ENCODE measurements at regions of chr9 and their contacts with region 1.

Region 1: DNA sequence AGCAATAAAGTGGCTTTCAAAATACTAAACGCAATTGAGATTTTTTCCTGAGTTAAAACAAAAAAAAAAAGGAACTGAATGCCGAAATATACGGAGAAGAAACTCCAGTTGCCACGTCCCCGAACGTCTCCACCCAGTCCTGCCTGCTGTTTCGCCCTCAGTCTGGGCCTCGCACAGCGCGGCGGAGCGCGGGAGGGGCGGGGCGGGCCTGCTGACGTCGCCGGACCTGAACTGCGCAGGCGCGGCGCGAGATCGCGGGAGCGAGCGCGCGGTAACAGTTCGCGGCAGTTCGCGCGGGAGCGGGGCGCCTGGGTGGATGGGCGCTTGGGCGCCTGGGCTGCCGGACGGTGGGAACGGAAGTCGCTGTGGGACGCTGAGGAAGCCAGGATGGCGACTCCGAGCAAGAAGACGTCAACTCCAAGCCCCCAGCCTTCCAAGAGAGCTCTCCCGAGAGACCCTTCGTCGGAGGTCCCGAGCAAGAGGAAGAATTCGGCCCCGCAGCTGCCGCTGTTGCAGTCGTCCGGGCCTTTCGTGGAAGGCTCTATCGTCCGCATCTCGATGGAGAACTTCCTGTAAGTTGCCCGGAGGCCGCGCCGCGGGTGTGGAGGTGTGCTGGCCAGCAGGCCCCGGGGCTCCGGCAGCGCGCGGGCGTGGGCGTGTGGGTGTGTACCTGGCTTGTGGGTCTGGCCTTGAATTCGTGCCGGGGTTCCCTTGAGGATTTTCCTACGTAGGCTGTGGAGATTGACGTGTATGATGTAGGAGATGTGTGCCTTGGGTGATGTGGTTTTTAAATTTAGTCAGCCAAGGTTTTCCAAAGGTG is at the start of gene SMC5:
- DNase-seq: peak; percentile 72 to 95
- H3K4me3 ChIP-seq: peak within 1 kb of the TSS; percentile 75
- H3K27ac ChIP-seq: peak within 1 kb of the TSS; percentile 89
- H3K4me1 ChIP-seq: peaks cover 68% of the 10 kb centered on the region
- H3K27me3 ChIP-seq: no peaks in the 10 kb centered on the region
- CTCF ChIP-seq: no peak
- total RNA-seq, gene SMC5: 34.4 and 41.9 TPM in 2 replicates

Region 2: DNA sequence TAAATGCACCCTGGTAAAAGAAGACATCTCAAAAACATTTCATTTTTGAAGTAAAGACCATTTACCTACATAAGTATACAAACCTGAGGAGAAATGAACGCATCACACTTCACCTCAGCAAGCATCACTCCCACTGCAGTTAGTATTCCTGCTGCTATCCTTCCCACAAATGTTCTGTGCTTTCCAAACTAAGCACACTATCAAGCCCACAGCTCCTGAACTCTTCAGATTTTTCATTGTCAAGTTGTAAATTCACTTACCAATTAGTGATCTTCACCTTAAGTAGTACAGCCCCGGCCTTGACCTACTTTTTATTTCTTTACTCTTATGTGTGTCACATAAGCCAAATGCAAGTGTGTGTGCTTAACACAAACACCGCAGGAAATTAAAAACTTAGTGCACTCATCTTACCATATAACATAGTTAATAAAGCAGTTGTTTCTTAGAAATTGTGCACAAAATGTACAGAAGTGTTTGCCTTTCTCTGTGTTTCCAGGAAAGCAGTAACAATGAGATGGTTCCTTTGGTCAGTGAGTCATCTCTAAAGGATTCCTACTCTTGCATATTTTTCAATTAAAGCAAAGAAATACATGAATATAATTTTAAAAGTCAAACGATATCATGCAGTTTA is 756.1 kb before region 1 on chr9:
- CTCF ChIA-PET with region 1: no interaction called
- POLR2A ChIA-PET with region 1: no interaction called
- intact Hi-C with region 1: no loop called
- DNase-seq: no peak
- H3K4me3 ChIP-seq: no peak overlapping the region
- H3K27ac ChIP-seq: no peak overlapping the region
- H3K4me1 ChIP-seq: no peaks in the 10 kb centered on the region; the same call in 1 of the 2 replicates
- H3K27me3 ChIP-seq: no peaks in the 10 kb centered on the region
- CTCF ChIP-seq: no peak

Region 3: GRCh38 chr9:69822091-69822750 is 436.7 kb before region 1 on chr9:
- CTCF ChIA-PET with region 1: no interaction called
- POLR2A ChIA-PET with region 1: interaction called, 10 read pairs
- intact Hi-C with region 1: no loop called
- DNase-seq: no peak
- H3K4me3 ChIP-seq: no peak overlapping the region
- H3K27ac ChIP-seq: no peak overlapping the region
- H3K4me1 ChIP-seq: no peaks in the 10 kb centered on the region
- H3K27me3 ChIP-seq: no peaks in the 10 kb centered on the region
- CTCF ChIP-seq: no peak

Region 4: DNA sequence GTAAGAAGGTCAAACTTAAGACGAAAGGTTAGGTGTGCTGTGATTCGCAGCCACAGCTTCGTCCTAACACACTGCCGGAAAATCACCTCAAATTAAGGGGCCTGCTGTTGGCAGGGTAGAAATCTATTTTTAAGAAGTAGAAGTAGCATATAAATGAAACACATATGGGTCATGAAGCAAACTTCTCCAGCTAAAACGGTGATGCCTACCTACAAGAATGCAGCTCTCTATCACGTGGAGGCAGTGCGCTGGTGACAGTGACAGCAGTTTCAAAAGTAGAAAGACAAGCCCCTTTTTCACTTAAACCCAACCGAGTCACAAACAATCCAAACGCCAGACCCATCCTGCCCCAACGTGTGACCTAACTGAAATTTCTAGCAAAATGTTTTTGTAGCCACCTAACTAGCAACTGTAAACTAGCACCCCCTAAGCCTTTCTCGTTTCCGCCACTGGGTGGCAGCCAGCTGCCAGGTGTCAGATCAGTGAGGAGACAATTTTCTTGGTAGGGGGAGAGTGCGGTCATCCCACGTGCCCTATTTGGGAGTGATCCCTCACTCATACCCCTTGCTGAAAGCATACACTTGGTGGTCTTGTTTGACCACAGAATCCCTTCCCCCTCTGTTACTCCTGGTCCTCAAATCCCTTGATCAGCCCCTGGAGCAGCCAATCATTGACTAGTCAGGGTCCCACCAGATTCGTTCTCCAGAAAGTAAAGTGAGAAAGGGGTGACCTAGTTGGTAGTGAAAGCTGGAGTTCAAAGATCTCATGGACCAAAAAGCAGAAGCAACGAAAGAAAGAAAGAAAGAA is 287.1 kb before region 1 on chr9:
- CTCF ChIA-PET with region 1: interaction called, 4 read pairs
- POLR2A ChIA-PET with region 1: no interaction called
- intact Hi-C with region 1: loop called (anchors 2 kb)
- DNase-seq: peak in 1 of 2 experiments; percentile 73
- H3K4me3 ChIP-seq: no peak overlapping the region
- H3K27ac ChIP-seq: no peak overlapping the region
- H3K4me1 ChIP-seq: no peaks in the 10 kb centered on the region
- H3K27me3 ChIP-seq: no peaks in the 10 kb centered on the region
- CTCF ChIP-seq: peak; percentile 91

Region 5: DNA sequence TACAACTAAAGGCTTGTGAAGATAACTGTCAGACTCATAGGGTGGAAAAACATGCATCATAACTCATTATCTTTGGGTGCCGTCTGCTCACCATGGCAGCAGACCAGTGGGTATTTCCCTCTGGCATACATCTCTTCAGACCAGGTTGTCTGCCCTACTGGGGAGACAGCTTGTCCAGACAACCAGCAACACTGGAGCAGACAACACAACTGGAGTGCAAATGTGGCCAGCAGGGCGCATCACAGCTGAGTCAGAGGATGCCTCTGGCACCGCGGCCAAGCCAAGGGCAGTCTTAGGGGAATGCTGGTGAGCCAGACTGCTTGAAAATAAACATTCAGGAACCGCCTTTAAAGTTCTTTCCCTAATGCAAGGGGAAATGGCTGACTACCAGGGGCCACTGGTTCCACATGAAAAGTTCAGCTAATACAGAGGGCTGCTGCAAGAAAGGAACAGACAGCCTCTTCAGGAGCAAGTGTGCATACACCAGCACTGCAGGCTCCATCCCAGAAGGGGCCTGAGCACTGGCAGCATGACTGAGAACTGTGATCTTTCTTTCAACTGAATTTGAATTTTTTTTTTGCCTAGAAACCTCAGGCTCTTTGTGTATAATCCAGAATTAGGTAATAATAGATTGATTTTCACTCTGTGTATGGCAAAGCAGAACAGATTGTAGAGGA is 137.9 kb before region 1 on chr9:
- CTCF ChIA-PET with region 1: no interaction called
- POLR2A ChIA-PET with region 1: no interaction called
- intact Hi-C with region 1: loop called (anchors 2 kb)
- DNase-seq: peak; percentile 50 to 70
- H3K4me3 ChIP-seq: no peak overlapping the region
- H3K27ac ChIP-seq: no peak overlapping the region
- H3K4me1 ChIP-seq: peaks cover 25% of the 10 kb centered on the region
- H3K27me3 ChIP-seq: no peaks in the 10 kb centered on the region
- CTCF ChIP-seq: no peak

Region 6: GRCh38 chr9:70160686-70161600 is 98.0 kb before region 1 on chr9:
- CTCF ChIA-PET with region 1: no interaction called
- POLR2A ChIA-PET with region 1: no interaction called
- intact Hi-C with region 1: no loop called
- DNase-seq: no peak
- H3K4me3 ChIP-seq: no peak overlapping the region
- H3K27ac ChIP-seq: no peak overlapping the region
- H3K4me1 ChIP-seq: no peaks in the 10 kb centered on the region
- H3K27me3 ChIP-seq: no peaks in the 10 kb centered on the region
- CTCF ChIP-seq: no peak